AG04450 (cell line): ENCODE measurements at regions of chr11 and their contacts with region 1.

Region 1: DNA sequence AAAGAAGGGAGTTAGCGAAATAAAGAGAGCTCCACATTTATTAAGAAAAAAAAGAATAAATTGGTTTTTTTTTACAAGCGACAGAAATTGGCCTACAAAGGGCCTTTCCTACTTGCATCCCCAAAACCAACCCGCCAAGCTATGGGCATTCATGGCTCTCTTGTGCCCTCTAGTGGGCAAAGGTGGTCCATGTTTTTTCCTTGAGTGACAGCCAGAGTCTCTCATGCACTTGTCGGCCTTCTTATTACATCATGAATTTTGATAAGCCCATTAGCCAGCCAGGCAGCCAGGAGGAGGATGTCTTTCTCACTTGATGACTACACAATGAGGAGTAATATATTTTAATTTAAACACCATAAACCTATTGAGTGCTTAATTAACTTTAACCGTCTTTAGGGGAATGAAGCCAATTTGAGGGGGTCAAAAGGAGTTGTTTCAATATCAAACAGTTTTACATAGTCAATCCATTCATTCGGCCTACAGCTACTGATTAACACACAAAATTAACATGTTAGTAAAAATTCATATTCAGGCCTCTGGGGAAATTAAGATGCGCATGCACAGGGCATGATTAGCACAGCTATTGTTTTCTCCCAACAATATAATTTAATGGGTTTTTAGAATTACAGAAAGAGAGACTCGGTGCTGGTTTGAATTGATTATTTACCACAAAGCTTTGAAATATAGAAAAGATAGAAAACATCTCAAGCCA is 85.5 kb downstream of the RCN1 start:
- DNase-seq: peak; percentile 48
- H3K4me3 ChIP-seq: no peak overlapping the region
- H3K27ac ChIP-seq: no peak overlapping the region
- H3K27me3 ChIP-seq: peaks cover 9% of the 10 kb centered on the region
- CTCF ChIP-seq: peak; percentile 94

Region 2: GRCh38 chr11:31340903-31341572 is 835.3 kb before region 1 on chr11:
- CTCF ChIA-PET with region 1: interaction called, 11 read pairs
- POLR2A ChIA-PET with region 1: no interaction called
- DNase-seq: no peak
- H3K4me3 ChIP-seq: no peak overlapping the region
- H3K27ac ChIP-seq: no peak overlapping the region
- H3K27me3 ChIP-seq: no peaks in the 10 kb centered on the region
- CTCF ChIP-seq: peak; percentile 70

Region 3: GRCh38 chr11:31958076-31958735 is 218.2 kb before region 1 on chr11:
- CTCF ChIA-PET with region 1: interaction called, 21 read pairs
- POLR2A ChIA-PET with region 1: no interaction called
- DNase-seq: no peak
- H3K4me3 ChIP-seq: no peak overlapping the region
- H3K27ac ChIP-seq: no peak overlapping the region
- H3K27me3 ChIP-seq: no peaks in the 10 kb centered on the region
- CTCF ChIP-seq: peak; percentile 85

Region 4: DNA sequence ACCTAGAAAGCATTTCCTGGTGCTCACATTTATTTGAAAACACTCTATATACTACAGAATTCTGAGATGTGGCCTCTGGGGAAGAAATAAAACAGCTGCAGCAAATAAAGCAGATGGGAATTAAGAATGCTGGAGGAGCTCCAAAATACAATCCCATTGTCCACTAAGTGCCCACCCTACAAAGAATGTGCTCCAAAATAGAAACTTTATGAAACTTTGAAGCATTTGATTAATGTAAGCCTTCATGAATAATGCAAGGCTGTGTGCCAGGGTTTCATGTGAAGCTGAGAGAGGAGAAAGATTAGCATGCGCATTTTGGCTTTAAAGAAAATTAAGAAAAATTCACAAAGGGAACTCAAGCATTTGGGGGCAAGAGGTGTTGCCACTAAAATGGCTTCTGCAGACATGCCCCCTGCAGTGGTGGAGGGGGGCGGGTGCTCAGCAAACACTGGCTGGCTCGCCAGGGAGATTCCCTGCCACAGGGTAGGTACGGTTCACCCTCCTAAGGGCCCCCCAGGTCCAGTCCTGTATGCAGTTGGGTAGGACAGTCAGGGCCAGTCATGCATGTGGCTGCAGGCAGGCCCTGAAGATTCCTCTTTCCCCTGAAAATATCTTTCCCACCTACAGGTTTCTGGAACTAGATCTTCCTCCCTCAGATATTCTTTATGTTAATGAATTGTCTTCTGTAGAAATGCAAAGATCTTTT is 132.1 kb before region 1 on chr11:
- CTCF ChIA-PET with region 1: interaction called, 269 read pairs
- POLR2A ChIA-PET with region 1: no interaction called
- DNase-seq: no peak
- H3K4me3 ChIP-seq: no peak overlapping the region
- H3K27ac ChIP-seq: no peak overlapping the region
- H3K27me3 ChIP-seq: peaks cover 11% of the 10 kb centered on the region
- CTCF ChIP-seq: no peak

Region 5: DNA sequence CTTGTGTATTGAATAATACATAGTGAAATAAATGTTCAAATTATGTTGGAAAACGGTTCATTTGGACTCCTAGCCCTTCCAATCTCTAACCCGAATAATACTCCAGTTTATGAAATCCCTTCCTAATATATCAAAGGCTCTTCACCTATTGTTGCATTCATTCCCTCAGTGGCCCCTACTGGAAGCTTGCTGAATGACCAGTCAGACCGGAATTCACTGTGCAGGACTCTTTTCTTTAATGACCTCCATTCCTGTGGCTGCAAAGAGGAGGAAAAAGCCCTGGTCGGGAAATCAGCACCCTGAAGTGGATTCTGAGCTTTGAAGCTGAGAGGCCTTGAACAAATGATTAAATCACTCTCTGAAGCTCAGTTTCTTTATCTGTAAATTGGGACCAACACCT is 104.6 kb before region 1 on chr11:
- CTCF ChIA-PET with region 1: interaction called, 18 read pairs
- POLR2A ChIA-PET with region 1: no interaction called
- DNase-seq: no peak
- H3K4me3 ChIP-seq: no peak overlapping the region
- H3K27ac ChIP-seq: no peak overlapping the region
- H3K27me3 ChIP-seq: peaks cover 23% of the 10 kb centered on the region
- CTCF ChIP-seq: peak; percentile 67

Region 6: GRCh38 chr11:32162351-32162750 is 14.0 kb before region 1 on chr11:
- CTCF ChIA-PET with region 1: interaction called, 43 read pairs
- POLR2A ChIA-PET with region 1: no interaction called
- DNase-seq: no peak
- H3K4me3 ChIP-seq: no peak overlapping the region
- H3K27ac ChIP-seq: no peak overlapping the region
- H3K27me3 ChIP-seq: peaks cover 35% of the 10 kb centered on the region
- CTCF ChIP-seq: no peak

Region 7: GRCh38 chr11:32594272-32594671 is 417.9 kb after region 1 on chr11:
- CTCF ChIA-PET with region 1: no interaction called
- POLR2A ChIA-PET with region 1: no interaction called
- DNase-seq: no peak
- H3K4me3 ChIP-seq: no peak overlapping the region
- H3K27ac ChIP-seq: no peak overlapping the region
- H3K27me3 ChIP-seq: no peaks in the 10 kb centered on the region
- CTCF ChIP-seq: no peak